CD4-positive, alpha-beta memory T cell (primary cell): ENCODE measurements at regions of chr13 and their contacts with region 1.

Region 1: DNA sequence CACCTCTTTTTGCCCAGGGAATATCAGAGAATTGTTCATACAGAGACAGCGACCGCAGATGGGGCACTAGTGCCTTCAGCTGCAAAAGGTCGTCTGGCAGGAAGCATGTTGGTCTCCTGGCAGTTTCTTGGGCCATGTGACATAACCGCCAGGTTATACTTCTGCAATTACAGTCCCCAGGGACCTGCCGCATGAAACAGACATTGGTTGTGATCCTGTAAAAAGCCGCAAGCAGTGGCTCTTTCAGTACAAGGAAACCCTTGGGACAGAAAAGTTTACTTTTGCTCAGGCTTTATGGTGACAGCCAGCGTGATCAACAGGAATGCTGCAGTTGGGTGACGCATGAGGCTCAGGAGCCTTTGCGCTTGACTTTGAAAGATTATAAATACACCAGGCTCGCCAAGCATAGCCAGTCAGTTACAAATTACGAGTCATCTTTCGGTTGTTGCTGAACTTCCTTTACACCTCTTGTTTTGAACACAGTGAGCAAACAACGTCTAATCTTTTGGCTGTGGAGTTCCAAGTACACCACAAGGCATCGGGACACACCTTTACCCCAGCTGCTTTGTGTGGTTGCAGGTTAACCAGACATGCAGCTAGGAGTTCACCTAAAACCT is 50.5 kb upstream of the UBE2L5 start:
- DNase-seq: peak; percentile 83 to 93 (median 88)
- H3K4me3 ChIP-seq: peak overlapping the region in 1 of 2 donors; percentile 41
- H3K4me3 Mint-ChIP-seq: peak overlapping the region; percentile 66 to 95 (median 87)
- H3K27ac ChIP-seq: peak overlapping the region; percentile 43
- H3K27ac Mint-ChIP-seq: peak overlapping the region; percentile 94 to 99 (median 98)
- H3K4me1 ChIP-seq: peaks cover 90% of the 10 kb centered on the region
- H3K4me1 Mint-ChIP-seq: peaks cover 66 to 92% (median 80%) of the 10 kb centered on the region in 4 donors
- H3K27me3 ChIP-seq: no peaks in the 10 kb centered on the region
- H3K27me3 Mint-ChIP-seq: peaks cover 0 to 3% of the 10 kb centered on the region in 2 donors

Region 2: DNA sequence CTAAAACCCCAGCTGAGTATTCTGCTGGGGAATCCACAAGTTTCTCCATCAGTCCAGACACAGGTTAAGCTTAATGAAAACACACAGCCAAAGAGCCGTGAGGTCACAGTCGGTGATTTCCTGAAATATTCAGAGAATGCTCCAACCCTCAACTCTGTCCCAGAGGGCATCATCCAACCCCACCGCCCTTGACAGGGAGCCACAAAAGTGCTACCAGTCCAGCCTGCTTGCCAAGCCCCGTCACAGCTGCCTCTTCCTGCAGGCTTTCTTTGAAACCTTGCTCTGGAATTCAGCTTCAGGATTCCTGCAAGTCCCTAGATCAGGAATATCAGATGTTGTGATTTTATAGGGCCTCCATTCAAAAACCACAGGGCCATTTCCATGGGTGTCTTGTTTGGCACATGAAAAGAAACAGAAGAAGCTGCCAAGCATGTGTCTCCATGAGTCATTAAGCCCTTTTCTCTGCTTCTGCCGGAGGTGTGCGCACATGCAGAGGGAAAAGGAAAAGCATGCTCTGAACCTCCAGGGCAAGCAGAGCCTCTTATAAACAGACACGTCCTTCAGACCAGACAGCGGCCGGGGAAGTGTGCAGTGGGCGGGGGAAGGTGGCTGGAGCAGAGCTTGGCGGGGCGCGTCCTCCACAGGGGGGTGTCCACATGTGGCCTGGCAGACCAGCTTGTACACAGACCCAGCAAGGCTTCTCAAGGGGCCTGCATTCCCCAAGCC is 229.1 kb before region 1 on chr13:
- CTCF ChIA-PET with region 1: no interaction called
- POLR2A ChIA-PET with region 1: interaction called, 7 read pairs
- intact Hi-C with region 1: loop called (anchors 5 kb)
- DNase-seq: peak; percentile 13 to 64 (median 22)
- H3K4me3 ChIP-seq: no peak overlapping the region
- H3K4me3 Mint-ChIP-seq: peak overlapping the region in 7 of 8 donors; percentile 4 to 74 (median 53)
- H3K27ac ChIP-seq: peak overlapping the region; percentile 27
- H3K27ac Mint-ChIP-seq: peak overlapping the region; percentile 83 to 92 (median 88)
- H3K4me1 ChIP-seq: peaks cover 67% of the 10 kb centered on the region
- H3K4me1 Mint-ChIP-seq: peaks cover 49 to 86% (median 70%) of the 10 kb centered on the region in 4 donors
- H3K27me3 ChIP-seq: no peaks in the 10 kb centered on the region
- H3K27me3 Mint-ChIP-seq: no peaks in the 10 kb centered on the region

Region 3: DNA sequence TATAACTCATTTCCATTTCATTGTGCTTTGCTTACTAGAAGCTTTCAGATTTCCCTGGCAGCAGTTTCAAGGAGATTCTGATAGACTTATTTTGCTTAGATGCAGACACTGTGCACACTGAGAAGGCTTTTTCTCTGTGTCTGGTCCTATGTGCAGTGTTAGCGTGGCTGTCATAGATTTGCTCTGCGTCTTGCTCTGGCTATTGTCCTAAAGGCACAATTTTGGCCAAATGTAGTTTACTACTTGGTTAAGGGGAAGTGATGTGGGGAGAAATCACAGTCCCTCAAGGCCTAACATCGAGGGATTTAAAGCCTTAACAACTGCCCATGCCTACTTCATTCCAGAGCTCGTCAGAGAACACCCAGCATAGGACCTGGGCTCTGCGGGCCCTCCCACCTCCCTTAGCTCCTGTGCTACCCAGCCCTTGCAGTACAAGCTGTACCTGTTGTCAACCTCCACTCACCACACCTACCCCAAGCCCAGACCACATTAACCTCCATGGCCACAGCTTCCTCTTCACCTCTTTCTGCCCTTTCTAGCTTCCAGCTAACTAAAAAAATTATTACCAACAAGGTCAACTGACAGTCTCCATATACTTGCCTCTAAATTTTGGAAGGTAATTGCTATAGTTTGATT is 25.5 kb before region 1 on chr13:
- CTCF ChIA-PET with region 1: interaction called, 10 read pairs
- POLR2A ChIA-PET with region 1: interaction called, 33 read pairs
- intact Hi-C with region 1: loop called (anchors 1 kb)
- DNase-seq: peak; percentile 76 to 82 (median 79)
- H3K4me3 ChIP-seq: peak overlapping the region in 1 of 2 donors; percentile 10
- H3K4me3 Mint-ChIP-seq: peak overlapping the region; percentile 45 to 88 (median 70)
- H3K27ac ChIP-seq: no peak overlapping the region
- H3K27ac Mint-ChIP-seq: peak overlapping the region; percentile 10 to 86 (median 45)
- H3K4me1 ChIP-seq: peaks cover 42% of the 10 kb centered on the region
- H3K4me1 Mint-ChIP-seq: peaks cover 35 to 48% (median 41%) of the 10 kb centered on the region in 4 donors
- H3K27me3 ChIP-seq: no peaks in the 10 kb centered on the region
- H3K27me3 Mint-ChIP-seq: no peaks in the 10 kb centered on the region

Region 4: DNA sequence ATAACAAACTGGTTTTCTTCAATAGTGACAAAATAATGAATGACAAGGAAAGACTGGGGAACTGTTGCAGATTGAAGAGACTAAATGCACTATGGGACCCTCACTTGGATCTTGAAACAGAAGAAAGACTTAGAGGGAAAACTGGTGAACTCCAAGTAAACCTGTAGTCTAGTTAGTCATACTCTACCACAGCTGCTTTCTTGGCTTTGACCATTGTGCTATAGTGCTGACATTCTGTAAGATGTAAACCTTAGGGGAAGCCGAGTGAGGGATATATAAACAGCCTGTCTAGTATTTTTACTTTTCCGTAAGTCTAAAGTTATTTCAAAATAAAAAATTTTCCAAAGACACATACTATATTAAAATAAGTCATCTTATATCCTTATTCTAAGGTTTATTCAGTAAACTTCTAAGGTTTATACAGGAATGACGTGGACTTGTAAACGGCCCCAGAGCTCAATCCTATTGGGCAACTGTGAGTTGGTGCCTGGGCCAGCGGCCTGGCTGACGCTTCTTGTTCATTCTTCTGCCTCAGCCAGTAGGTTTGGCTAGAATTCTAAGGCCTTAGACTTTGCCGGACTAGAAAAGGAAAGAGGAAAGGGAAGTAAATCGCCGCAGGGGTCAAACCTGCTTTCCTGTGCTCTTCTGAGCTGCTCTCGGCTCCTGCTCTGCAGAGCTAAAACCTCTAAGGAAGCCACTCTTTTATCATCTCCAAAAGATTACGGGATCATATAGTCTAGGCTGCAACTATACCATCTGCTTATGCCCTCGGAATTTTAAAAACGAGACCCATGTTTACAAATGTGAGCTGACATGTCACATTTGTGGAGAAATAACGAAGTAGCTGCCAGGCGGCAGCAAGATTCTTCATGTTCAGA is 16.9 kb after region 1 on chr13:
- CTCF ChIA-PET with region 1: interaction called, 136 read pairs
- POLR2A ChIA-PET with region 1: interaction called, 401 read pairs
- intact Hi-C with region 1: loop called (anchors 1 kb)
- DNase-seq: no peak
- H3K4me3 ChIP-seq: peak overlapping the region in 1 of 2 donors; percentile 29
- H3K4me3 Mint-ChIP-seq: peak overlapping the region; percentile 63 to 88 (median 80)
- H3K27ac ChIP-seq: peak overlapping the region; percentile 23
- H3K27ac Mint-ChIP-seq: peak overlapping the region; percentile 58 to 93 (median 90)
- H3K4me1 ChIP-seq: peaks cover 32% of the 10 kb centered on the region
- H3K4me1 Mint-ChIP-seq: peaks cover 28 to 50% (median 39%) of the 10 kb centered on the region in 4 donors
- H3K27me3 ChIP-seq: no peaks in the 10 kb centered on the region
- H3K27me3 Mint-ChIP-seq: no peaks in the 10 kb centered on the region

Region 5: GRCh38 chr13:30415430-30416030 is 43.8 kb after region 1 on chr13:
- CTCF ChIA-PET with region 1: interaction called, 103 read pairs
- POLR2A ChIA-PET with region 1: interaction called, 21 read pairs
- intact Hi-C with region 1: no loop called
- DNase-seq: peak in 2 of 5 donors; percentile 30 to 50
- H3K4me3 ChIP-seq: no peak overlapping the region
- H3K4me3 Mint-ChIP-seq: peak overlapping the region in 6 of 8 donors; percentile 10 to 51 (median 42)
- H3K27ac ChIP-seq: no peak overlapping the region
- H3K27ac Mint-ChIP-seq: peak overlapping the region in 4 of 7 donors; percentile 28 to 85 (median 64)
- H3K4me1 ChIP-seq: peaks cover 9% of the 10 kb centered on the region
- H3K4me1 Mint-ChIP-seq: peaks cover 8 to 31% (median 23%) of the 10 kb centered on the region in 4 donors
- H3K27me3 ChIP-seq: no peaks in the 10 kb centered on the region
- H3K27me3 Mint-ChIP-seq: no peaks in the 10 kb centered on the region

Region 6: GRCh38 chr13:30739761-30740642 is 368.2 kb after region 1 on chr13:
- CTCF ChIA-PET with region 1: interaction called, 3 read pairs
- POLR2A ChIA-PET with region 1: interaction called, 5 read pairs
- intact Hi-C with region 1: loop called (anchors 5 kb)
- DNase-seq: peak; percentile 63 to 86 (median 69)
- H3K4me3 ChIP-seq: peak overlapping the region; percentile 2 to 46
- H3K4me3 Mint-ChIP-seq: peak overlapping the region; percentile 80 to 98 (median 86)
- H3K27ac ChIP-seq: peak overlapping the region; percentile 47
- H3K27ac Mint-ChIP-seq: peak overlapping the region; percentile 81 to 96 (median 91)
- H3K4me1 ChIP-seq: peaks cover 84% of the 10 kb centered on the region
- H3K4me1 Mint-ChIP-seq: peaks cover 60 to 90% (median 76%) of the 10 kb centered on the region in 4 donors
- H3K27me3 ChIP-seq: no peaks in the 10 kb centered on the region
- H3K27me3 Mint-ChIP-seq: no peaks in the 10 kb centered on the region

Region 7: DNA sequence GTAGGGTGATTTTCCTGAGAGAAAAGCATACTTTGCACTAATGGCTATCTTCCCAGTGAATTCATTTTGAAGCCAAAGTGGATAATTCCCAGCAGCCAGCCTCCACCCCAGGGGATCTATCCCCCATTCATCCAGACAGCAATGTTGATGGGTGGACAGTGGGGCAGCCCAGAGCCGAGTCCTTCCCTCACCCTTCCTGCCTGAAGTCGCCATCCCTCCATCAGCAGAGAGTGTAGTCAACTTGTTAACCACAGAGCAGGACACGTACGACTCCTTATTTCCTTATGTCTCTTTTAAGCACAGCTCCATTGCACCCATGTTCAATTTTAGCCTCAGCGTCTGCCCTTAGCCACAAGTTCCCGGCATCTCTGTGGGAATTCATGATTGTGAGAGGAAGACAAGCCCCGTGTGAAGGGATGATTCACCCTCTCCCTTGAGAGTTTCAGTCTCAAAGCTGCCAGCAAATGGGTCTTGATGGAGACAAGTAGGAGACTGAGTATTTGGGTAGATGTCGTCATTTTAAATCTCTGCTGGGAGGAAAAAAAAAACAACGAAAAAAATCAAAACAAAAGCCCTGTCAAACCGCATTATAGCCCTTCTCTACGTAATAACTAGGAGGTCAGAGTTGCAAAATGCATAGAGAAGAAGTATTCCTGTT is 476.0 kb after region 1 on chr13:
- CTCF ChIA-PET with region 1: no interaction called
- POLR2A ChIA-PET with region 1: no interaction called
- intact Hi-C with region 1: no loop called
- DNase-seq: no peak
- H3K4me3 ChIP-seq: no peak overlapping the region
- H3K4me3 Mint-ChIP-seq: peak overlapping the region in 7 of 8 donors; percentile 15 to 67 (median 55)
- H3K27ac ChIP-seq: no peak overlapping the region
- H3K27ac Mint-ChIP-seq: peak overlapping the region in 4 of 7 donors; percentile 8 to 61 (median 34)
- H3K4me1 ChIP-seq: peaks cover 28% of the 10 kb centered on the region
- H3K4me1 Mint-ChIP-seq: peaks cover 15 to 21% (median 18%) of the 10 kb centered on the region in 4 donors
- H3K27me3 ChIP-seq: no peaks in the 10 kb centered on the region
- H3K27me3 Mint-ChIP-seq: peaks cover 0 to 2% of the 10 kb centered on the region in 2 donors